ENCODE measurements at regions of chr2 and their contacts with region 1.

Region 1: DNA sequence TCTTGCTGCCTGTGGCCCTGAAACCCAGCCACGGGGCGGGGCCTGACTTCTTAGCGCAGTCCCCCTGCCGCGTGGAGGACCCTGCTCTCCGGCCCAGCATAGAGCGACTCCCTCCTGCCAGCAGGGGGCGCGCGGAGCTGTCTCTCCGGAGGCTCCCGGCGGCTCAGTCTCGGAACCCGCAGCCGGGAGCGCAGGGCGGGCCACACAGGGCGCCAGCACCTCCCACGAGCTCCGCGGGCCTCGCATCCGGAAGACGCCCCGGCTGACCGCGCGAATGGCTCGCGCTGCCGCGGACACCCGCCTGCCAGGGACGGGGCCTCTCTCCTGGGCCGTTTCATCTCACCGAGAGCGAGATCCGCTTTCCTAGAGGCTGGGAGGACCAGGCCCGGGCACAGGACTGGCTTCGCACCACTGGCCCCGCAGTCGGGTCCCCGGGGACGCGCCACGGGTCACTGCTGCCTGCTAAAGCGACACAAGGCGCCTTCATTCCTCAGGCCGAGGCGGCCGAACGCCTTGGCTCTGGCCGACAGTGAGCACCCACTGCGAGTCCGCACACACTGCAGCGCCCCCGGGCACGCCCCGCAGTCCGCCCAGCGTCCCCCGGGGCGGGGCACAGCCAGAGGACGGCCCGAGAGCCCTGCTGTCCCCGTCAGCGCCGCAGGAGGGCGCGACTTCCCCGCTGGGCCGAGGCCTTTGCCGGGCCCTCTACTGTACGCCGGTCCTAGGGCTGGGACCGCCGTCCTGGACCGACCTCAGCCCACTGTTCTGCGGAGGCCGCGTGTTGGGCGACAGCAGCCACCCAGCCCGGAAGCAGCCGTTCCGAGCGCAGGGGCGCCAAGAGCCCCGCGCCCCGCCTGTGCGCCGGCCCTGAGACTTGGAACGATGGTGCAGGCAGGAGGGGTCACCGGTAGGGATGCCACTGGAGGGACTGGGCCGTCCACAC is 39.0 kb upstream of the ARHGEF4 start:
- DNase-seq: peak; percentile 97
- H3K4me3 Mint-ChIP-seq: peak overlapping the region; percentile 69
- H3K27ac Mint-ChIP-seq: peak overlapping the region; percentile 20
- H3K4me1 Mint-ChIP-seq: peaks cover 5% of the 10 kb centered on the region
- H3K27me3 Mint-ChIP-seq: peaks cover 20% of the 10 kb centered on the region

Region 2: DNA sequence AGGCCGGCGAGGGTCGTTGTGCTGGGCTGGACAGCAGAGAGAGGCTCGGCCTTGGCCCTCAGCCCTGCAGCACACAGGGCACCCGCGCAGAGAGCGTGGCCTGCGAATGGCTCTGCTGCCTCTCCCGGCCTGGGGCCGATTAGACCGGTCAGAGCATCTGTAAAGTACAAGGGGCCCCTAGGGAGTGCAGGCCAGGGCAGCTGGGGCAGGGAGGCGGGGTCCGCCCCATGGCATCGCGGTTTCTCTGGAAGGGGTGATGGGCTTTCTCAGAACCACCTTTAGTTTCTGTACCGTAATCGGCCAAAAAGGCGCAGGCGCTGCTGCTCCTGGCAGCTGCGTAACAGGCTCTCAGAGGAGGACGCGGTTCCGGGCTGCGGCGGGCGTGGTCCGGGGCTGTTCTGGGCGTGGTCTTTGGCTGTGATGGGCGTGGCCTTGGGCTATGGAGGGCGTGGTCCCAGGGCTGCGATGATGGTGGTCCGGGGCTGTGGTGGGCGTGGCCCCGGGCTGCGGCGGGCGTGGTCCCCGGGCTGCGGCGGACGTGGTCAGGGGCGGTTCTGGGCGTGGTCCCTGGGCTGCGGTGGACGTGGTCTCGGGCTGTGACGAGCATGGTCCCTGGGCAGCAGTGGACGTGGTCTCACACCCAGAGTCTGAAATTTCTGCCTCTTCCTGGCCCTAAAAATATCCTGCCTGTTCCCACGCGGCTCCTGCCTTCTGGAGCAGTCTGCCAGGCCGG is 70.3 kb before region 1 on chr2:
- intact Hi-C with region 1: loop called (anchors 1 kb)
- DNase-seq: peak; percentile 96
- H3K4me3 Mint-ChIP-seq: peak overlapping the region; percentile 81
- H3K27ac Mint-ChIP-seq: peak overlapping the region; percentile 61
- H3K4me1 Mint-ChIP-seq: peaks cover 3% of the 10 kb centered on the region
- H3K27me3 Mint-ChIP-seq: peaks cover 14% of the 10 kb centered on the region

Region 3: DNA sequence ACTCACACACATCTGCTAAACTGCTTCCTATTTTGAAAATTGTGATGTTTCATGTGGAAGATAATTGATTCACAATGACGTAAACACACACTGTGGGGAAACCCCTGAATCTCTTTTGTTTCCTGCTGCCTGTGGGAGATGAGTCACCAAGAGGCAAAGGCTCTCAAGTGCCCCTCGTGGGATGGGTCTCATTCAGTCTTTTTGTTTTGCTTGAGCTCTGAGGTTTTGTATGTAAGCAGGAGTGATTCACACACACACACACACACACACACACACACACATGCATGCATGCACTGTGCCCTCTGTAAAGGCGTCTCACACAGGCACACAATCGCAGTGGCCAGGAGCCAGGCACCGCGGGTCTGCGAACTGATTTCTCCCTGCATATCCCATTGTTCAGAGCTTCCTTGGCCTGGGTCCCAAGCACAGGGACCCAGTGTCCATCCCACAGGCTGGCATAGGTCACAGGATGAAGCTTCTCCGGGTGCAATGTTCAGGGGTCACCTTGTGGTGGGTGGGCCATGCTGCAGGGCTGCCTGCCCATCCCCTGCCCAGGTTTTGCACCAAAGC is 26.8 kb after region 1 on chr2:
- intact Hi-C with region 1: loop called (anchors 1 kb)
- DNase-seq: peak; percentile 92
- H3K4me3 Mint-ChIP-seq: peak overlapping the region; percentile 71
- H3K27ac Mint-ChIP-seq: peak overlapping the region; percentile 89
- H3K4me1 Mint-ChIP-seq: peaks cover 20% of the 10 kb centered on the region
- H3K27me3 Mint-ChIP-seq: peaks cover 21% of the 10 kb centered on the region

Region 4: DNA sequence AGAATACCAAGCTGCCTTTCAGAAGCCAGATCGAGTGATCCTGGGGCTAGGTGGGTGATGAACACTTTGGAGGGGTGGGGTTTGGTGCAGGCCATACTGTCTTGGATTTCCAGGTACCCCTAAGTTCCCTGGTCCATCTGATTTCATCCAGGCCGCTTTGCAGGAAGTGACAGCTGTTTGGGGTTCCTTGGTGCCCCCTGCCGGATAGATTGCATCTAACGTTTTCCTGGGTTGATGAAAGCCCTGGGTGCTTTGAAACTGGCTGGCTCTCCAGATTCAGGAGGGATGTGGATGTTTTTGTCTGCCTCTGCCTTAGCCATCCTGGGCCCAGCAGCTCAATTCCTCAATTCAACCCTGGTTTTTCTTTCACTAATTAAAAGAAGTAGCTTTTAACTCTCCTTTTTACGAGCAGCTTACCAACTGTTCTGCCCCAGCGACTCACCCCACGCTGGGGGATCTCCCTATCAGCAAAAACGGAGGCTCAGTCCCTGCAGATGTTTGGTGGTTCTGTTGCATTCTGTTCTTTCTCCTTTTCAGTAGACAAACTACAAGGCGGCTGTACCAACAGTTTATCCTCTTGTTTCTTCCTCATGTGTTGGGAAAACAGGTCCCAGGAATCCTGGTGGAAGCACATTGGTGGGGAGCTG is 76.1 kb after region 1 on chr2:
- intact Hi-C with region 1: loop called (anchors 1 kb)
- DNase-seq: peak; percentile 91
- H3K4me3 Mint-ChIP-seq: no peak overlapping the region
- H3K27ac Mint-ChIP-seq: no peak overlapping the region
- H3K4me1 Mint-ChIP-seq: peaks cover 1% of the 10 kb centered on the region
- H3K27me3 Mint-ChIP-seq: peaks cover 8% of the 10 kb centered on the region

Region 5: DNA sequence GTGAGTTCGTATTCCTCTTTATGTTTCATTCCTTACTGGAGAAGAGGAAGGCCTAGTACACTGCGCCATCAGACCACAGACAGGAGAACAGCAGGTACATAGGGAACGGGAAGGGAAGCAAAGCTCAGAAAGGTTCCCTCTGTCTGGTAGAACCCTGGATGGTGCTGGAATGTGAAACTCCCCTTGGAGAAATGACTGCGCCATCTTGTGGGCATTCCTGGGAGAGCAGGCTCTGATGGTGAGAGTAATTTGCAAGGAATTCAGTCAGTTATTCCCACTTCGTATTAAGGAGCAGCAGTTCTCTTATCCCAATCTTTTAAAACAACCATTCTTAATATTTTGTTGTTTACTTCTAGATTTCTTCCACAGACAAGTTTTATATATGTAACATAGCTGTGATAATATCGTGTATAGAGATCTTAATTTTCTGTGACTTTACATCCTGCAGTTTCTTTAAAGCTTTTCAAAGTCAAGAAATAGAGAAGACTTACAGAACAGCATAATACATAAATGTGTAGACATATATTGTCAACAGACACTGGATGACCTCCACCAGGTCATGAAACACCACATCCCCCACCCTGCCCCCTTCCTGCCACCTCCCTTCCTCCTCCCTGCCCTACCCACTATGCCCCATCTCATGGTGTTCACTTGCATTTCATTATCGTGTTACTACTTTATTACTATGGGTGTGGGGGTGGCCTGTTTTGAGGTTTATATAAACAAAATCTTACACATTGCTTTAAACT is 122.8 kb after region 1 on chr2:
- intact Hi-C with region 1: loop called (anchors 1 kb)
- DNase-seq: peak; percentile 87
- H3K4me3 Mint-ChIP-seq: no peak overlapping the region
- H3K27ac Mint-ChIP-seq: no peak overlapping the region
- H3K4me1 Mint-ChIP-seq: no peaks in the 10 kb centered on the region
- H3K27me3 Mint-ChIP-seq: peaks cover 4% of the 10 kb centered on the region

Region 6: GRCh38 chr2:130966775-130967490 is 169.2 kb after region 1 on chr2:
- intact Hi-C with region 1: loop called (anchors 5 kb)
- DNase-seq: peak; percentile 21
- H3K4me3 Mint-ChIP-seq: no peak overlapping the region
- H3K27ac Mint-ChIP-seq: no peak overlapping the region
- H3K4me1 Mint-ChIP-seq: peaks cover 13% of the 10 kb centered on the region
- H3K27me3 Mint-ChIP-seq: peaks cover 39% of the 10 kb centered on the region

Region 7: GRCh38 chr2:131105156-131105949 is 307.6 kb after region 1 on chr2 and contains the start of gene PLEKHB2:
- intact Hi-C with region 1: loop called (anchors 10 kb)
- DNase-seq: peak; percentile 99
- H3K4me3 Mint-ChIP-seq: peak within 1 kb of the TSS; percentile 92
- H3K27ac Mint-ChIP-seq: peak within 1 kb of the TSS; percentile 95
- H3K4me1 Mint-ChIP-seq: peaks cover 44% of the 10 kb centered on the region
- H3K27me3 Mint-ChIP-seq: no peaks in the 10 kb centered on the region
- total RNA-seq, gene PLEKHB2: 62.4 and 66.7 TPM in 2 replicates